Dorsolateral prefrontal cortex (tissue), 120 donors: ENCODE measurements at regions of chr6 and their contacts with region 1.

Region 1: DNA sequence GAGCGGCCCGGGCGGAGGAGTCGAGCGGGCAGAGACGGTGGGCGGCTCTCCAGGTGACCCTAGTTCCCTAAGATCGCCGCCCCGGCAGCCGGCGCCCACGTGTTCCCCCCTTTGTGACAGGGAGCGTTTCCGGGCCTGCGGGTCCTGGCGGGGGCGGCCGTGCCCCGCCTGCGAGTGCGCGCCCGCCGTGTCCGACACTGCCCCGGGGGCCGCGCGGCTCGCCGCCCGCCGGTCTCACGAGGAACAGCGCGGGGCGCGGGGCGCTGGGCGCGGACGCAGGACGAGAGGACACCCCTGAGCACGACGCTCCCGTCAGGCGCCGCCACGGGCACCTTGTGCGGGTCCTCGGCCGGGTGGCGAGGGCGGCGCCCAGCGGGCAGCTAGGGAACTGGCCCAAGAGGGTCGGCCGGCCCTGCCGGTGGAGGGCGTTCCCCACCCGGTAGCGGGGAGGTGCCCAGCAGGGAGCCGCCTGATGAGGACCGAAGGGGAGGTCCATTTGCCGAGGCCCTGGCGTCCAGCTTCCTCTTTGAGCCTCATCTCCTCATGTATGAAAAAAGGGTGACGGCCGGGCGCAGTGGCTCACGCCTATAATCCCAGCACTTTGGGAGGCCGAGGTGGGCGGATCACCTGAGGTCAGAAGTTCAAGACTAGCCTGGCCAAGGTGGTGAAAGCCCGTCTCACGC is at the start of gene VARS1:
- DNase-seq: peak; percentile 71 to 92 (median 84)
- H3K4me3 ChIP-seq: peak within 1 kb of the TSS; percentile 66 to 98 (median 91)
- H3K27ac ChIP-seq: peak within 1 kb of the TSS; percentile 82 to 100 (median 95)
- H3K27me3 ChIP-seq: no peaks in the 10 kb centered on the region
- CTCF ChIP-seq: peak; percentile 56 to 98 (median 86)
- total RNA-seq, gene VARS1: 36.7 to 78.7 (median 56.4) TPM

Region 2: GRCh38 chr6:31541658-31542521 is 253.9 kb before region 1 on chr6 and contains the start of gene DDX39B:
- intact Hi-C with region 1: loop called in 1 of 2 experiments (anchors 10 kb)
- DNase-seq: peak; percentile 93 to 97 (median 95)
- H3K4me3 ChIP-seq: peak within 1 kb of the TSS; percentile 58 to 97 (median 80)
- H3K27ac ChIP-seq: peak within 1 kb of the TSS; percentile 77 to 99 (median 97)
- H3K27me3 ChIP-seq: no peaks in the 10 kb centered on the region
- CTCF ChIP-seq: peak in 25 of 56 donors; percentile 10 to 57 (median 24)
- total RNA-seq, gene DDX39B: 154 to 265 (median 191) TPM

Region 3: DNA sequence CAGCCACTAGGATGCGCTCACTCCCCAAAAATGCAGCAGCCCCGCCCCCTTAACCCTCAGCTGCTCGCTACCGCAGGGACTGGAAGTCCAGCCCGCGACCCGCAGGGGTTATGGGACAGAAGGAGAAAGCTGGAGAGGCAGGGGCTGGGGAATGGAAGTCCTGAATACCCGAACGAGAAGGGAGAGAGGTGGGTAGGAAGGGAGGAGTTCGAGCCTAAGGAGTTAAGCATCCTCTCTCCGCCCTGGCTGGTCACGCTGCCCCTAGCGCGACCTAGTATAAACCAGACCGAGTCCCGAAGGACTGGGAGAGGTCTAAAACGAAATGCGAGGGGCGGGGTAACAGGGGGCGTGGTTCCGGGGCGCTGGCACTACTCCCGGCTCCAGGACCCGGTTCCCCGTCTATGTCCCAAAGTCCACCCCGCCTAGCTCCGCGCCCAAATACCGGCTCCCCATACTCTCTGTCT is 66.2 kb before region 1 on chr6:
- intact Hi-C with region 1: loop called in 1 of 2 experiments (anchors 1 kb)
- DNase-seq: peak; percentile 56 to 86 (median 68)
- H3K4me3 ChIP-seq: peak overlapping the region; percentile 56 to 93 (median 75)
- H3K27ac ChIP-seq: peak overlapping the region in 58 of 59 donors; percentile 27 to 96 (median 82)
- H3K27me3 ChIP-seq: peaks cover 0 to 8% (median 0%) of the 10 kb centered on the region in 45 donors
- CTCF ChIP-seq: peak in 38 of 56 donors; percentile 4 to 79 (median 70)

Region 4: GRCh38 chr6:31739639-31740396 is 55.9 kb before region 1 on chr6 and contains the start of gene MSH5:
- intact Hi-C with region 1: loop called in 1 of 2 experiments (anchors 5 kb)
- DNase-seq: peak; percentile 95 to 99 (median 98)
- H3K4me3 ChIP-seq: peak within 1 kb of the TSS; percentile 48 to 91 (median 80)
- H3K27ac ChIP-seq: peak within 1 kb of the TSS in 31 of 59 donors; percentile 6 to 80 (median 51)
- H3K27me3 ChIP-seq: peaks cover 0 to 11% (median 0%) of the 10 kb centered on the region in 45 donors
- CTCF ChIP-seq: peak in 11 of 56 donors; percentile 14 to 37 (median 21)
- total RNA-seq, gene MSH5: 0.83 to 23.4 (median 9.7) TPM

Region 5: DNA sequence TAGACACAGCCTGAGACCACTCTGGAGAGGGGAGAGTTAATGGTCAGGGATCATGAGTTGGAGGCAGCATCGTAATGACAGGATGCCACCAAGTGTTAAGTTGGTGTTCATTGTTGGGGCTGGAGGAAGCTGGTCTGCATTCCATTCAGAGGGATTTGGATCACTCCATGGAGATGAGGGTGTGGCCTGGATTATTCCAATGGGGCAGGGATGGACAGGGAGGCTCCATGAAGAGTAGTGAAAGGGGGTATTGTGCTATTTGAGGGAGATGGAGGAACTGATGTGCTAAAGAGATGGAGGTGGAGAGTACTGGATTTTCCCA is 32.2 kb before region 1 on chr6:
- intact Hi-C with region 1: no loop called
- DNase-seq: no peak
- H3K4me3 ChIP-seq: no peak overlapping the region
- H3K27ac ChIP-seq: peak overlapping the region in 1 of 59 donors; percentile 53
- H3K27me3 ChIP-seq: no peaks in the 10 kb centered on the region
- CTCF ChIP-seq: no peak

Region 6: GRCh38 chr6:31806465-31807272 is 10.9 kb after region 1 on chr6 and contains the start of gene LSM2:
- intact Hi-C with region 1: loop called in 1 of 2 experiments (anchors 1 kb)
- DNase-seq: peak; percentile 93 to 98 (median 97)
- H3K4me3 ChIP-seq: peak within 1 kb of the TSS; percentile 58 to 93 (median 75)
- H3K27ac ChIP-seq: peak within 1 kb of the TSS; percentile 56 to 99 (median 95)
- H3K27me3 ChIP-seq: no peaks in the 10 kb centered on the region
- CTCF ChIP-seq: peak in 52 of 56 donors; percentile 7 to 72 (median 52)
- total RNA-seq, gene LSM2: 14.4 to 37.9 (median 25.8) TPM

Region 7: GRCh38 chr6:31834434-31835198 is 38.9 kb after region 1 on chr6:
- intact Hi-C with region 1: loop called in 1 of 2 experiments (anchors 2 kb)
- DNase-seq: peak; percentile 77 to 89 (median 86)
- H3K4me3 ChIP-seq: peak overlapping the region; percentile 72 to 100 (median 94)
- H3K27ac ChIP-seq: peak overlapping the region; percentile 79 to 99 (median 97)
- H3K27me3 ChIP-seq: no peaks in the 10 kb centered on the region
- CTCF ChIP-seq: peak in 26 of 56 donors; percentile 5 to 48 (median 22)

Region 8: DNA sequence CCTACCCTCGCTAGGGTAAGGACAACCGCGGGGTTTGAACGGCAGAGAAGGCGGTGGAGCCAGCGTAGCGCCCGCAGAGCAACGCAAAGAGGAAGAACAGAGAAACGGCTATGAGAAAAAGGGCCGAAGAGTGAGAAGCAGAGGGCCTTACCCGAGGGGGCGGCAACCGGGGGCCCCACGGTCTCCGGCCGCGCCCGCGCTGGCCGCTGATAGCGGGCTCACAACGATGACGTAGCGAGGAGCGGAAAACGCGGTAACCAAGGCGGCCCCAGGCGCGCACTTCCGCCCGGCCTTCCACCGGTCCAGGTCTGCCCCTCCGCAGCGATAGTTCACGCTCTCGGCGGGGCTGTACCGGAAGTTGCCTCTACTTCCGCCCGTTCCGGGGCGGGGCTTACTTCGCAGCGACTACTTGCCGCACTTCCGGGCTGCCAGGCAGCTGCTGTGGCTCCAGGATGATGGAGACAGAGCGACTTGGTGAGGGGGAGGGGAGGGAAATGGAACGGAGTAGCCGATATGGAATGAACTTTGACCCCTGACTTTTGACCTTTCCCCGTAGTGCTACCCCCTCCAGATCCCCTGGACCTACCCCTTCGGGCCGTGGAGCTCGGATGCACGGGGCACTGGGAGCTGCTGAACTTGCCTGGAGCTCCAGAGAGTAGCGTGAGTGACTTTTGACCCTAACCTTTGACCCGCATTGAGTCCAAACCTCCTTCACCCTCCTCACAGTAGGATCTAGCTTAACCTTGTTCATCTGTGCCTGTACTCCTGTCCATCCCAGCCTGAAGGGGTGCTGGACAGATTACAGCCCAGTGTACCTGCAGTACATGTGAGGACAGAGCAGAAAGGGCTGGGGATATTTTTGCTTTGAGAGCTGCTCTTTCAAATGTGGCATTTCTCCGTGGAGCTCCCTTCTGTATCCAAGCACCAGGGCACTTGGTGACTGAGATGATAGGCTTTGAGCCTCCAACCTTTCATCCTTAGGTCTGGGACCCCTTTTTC is 163.3 kb after region 1 on chr6 and contains the starts of genes NELFE and SKIC2:
- intact Hi-C with region 1: loop called in 1 of 2 experiments (anchors 10 kb)
- DNase-seq: peak; percentile 98 to 100 (median 99)
- H3K4me3 ChIP-seq: peak within 1 kb of the TSS; percentile 61 to 100 (median 94)
- H3K27ac ChIP-seq: peak within 1 kb of the TSS in 58 of 59 donors; percentile 10 to 93 (median 81)
- H3K27me3 ChIP-seq: no peaks in the 10 kb centered on the region
- CTCF ChIP-seq: peak in 26 of 56 donors; percentile 4 to 53 (median 26)
- total RNA-seq, gene NELFE: 28.5 to 67.8 (median 43.3) TPM
- total RNA-seq, gene SKIC2: 48.6 to 115 (median 68.4) TPM

Region 9: GRCh38 chr6:31979238-31979898 is 183.6 kb after region 1 on chr6:
- intact Hi-C with region 1: no loop called
- DNase-seq: no peak
- H3K4me3 ChIP-seq: no peak overlapping the region
- H3K27ac ChIP-seq: peak overlapping the region in 4 of 59 donors; percentile 14 to 35 (median 19)
- H3K27me3 ChIP-seq: no peaks in the 10 kb centered on the region
- CTCF ChIP-seq: no peak

Region 10: DNA sequence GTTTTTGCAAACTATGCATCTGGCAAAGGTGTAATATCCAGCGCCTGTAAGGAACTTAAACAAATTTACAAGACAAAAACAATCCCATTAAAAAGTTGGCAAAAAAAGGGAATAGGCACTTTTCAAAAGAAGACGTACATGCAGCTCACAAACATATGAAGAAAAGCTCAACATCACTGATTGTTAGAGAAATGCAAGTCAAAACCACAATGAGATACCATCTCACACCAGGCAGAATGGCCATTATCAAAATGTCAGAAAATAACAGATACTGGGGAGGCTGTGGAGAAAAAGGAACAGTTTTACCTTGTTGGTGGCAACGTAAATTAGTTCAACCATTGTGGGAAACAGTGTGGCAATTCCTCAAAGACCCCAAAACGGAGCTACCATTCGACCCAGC is 521.8 kb after region 1 on chr6:
- intact Hi-C with region 1: no loop called
- DNase-seq: no peak
- H3K4me3 ChIP-seq: no peak overlapping the region
- H3K27ac ChIP-seq: no peak overlapping the region
- H3K27me3 ChIP-seq: peaks cover 0 to 3% (median 0%) of the 10 kb centered on the region in 45 donors
- CTCF ChIP-seq: no peak